ENCODE measurements at regions of chr12 and their contacts with region 1.

Region 1: DNA sequence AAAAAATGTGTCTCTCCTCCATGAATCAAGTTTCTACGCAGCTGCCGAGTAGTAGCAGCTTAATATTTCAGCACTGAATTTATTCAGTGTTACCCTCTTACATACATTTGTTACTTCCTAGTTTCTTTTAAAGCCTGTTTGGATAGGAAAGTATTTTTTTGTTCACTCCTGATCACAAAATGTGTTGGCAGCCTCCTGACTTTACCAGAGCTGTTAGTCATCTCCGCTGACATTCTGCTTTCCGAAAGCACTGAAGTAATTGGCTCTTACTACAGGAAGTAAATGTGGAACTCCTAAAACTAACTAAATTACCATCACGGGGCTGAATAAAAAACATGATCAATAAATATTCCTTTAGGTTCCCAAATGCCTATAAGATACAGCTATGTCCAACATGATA is 225.5 kb downstream of the EPS8 start:
- DNase-seq: peak; percentile 20
- H3K4me3 Mint-ChIP-seq: peak overlapping the region; percentile 87
- H3K27ac Mint-ChIP-seq: peak overlapping the region; percentile 89
- H3K4me1 Mint-ChIP-seq: peaks cover 77% of the 10 kb centered on the region
- H3K27me3 Mint-ChIP-seq: peaks cover 2% of the 10 kb centered on the region

Region 2: DNA sequence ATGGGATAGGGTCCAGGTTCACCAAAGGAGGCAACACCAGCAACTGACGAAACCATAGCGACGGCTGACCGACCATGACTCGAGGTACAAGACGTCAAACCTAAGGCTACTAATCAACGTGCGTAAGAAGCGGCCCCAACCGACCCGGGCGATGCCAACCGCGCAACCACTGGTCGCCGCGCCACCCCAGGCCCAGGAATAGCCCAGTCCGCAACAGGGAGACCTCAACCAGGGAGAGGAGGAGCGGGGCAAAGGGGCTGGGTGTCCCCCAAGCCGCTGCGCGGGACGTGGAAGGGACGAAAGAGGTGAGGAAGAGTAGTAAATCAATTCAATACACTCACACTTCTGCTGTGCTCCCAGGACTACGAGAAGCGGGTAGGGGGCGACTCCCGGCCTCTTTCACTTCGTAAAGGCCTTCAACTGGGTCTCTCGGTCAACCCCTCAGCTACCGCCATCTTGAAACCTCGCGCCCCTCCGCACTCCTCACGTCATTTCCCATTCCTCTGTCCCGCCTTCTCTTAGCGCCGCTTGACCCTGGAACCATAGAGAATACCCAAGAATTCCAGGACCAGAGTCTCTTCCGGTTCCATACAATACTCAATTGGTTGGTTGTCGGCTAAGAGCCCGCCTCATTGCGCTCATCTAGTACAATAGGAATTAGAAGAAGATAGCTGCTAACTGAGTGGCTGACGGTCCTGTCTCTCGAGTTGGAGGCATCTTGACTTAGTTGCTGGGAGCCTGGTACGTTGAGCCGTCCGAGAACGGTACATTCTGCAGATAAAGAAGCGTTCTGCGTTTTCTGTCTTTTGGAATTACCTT is 760.4 kb before region 1 on chr12 and contains the starts of genes C12orf60 and WBP11:
- intact Hi-C with region 1: loop called (anchors 10 kb)
- DNase-seq: peak; percentile 84
- H3K4me3 Mint-ChIP-seq: no peak within 1 kb of the TSS
- H3K27ac Mint-ChIP-seq: no peak within 1 kb of the TSS
- H3K4me1 Mint-ChIP-seq: peaks cover 22% of the 10 kb centered on the region
- H3K27me3 Mint-ChIP-seq: no peaks in the 10 kb centered on the region
- total RNA-seq, gene C12orf60: 2.1 and 2.2 TPM in 2 replicates
- total RNA-seq, gene WBP11: 128 and 142 TPM in 2 replicates

Region 3: GRCh38 chr12:15546102-15546701 is 17.5 kb before region 1 on chr12:
- intact Hi-C with region 1: loop called (anchors 1 kb)
- DNase-seq: no peak
- H3K4me3 Mint-ChIP-seq: peak overlapping the region; percentile 39
- H3K27ac Mint-ChIP-seq: peak overlapping the region; percentile 80
- H3K4me1 Mint-ChIP-seq: peaks cover 44% of the 10 kb centered on the region
- H3K27me3 Mint-ChIP-seq: no peaks in the 10 kb centered on the region

Region 4: GRCh38 chr12:15575671-15576541 is 12.2 kb after region 1 on chr12:
- intact Hi-C with region 1: loop called (anchors 1 kb)
- DNase-seq: no peak
- H3K4me3 Mint-ChIP-seq: peak overlapping the region; percentile 12
- H3K27ac Mint-ChIP-seq: peak overlapping the region; percentile 88
- H3K4me1 Mint-ChIP-seq: peaks cover 64% of the 10 kb centered on the region
- H3K27me3 Mint-ChIP-seq: no peaks in the 10 kb centered on the region

Measured in activated T-helper 1 cell treated with anti-CD3 and anti-CD28 coated beads, Interleukin-12 subunit alpha, Interleukin-12 subunit beta, Interleukin-2, Interleukin-4 antibody, amounts not matched to agents 30 ng/mL and 10 ng/mL and 1 ng/mL, durations not matched to agents 14 hours and 24 hours and 36 hours (primary cell).